ENCODE measurements at regions of chr15 and their contacts with region 1.

Region 1: DNA sequence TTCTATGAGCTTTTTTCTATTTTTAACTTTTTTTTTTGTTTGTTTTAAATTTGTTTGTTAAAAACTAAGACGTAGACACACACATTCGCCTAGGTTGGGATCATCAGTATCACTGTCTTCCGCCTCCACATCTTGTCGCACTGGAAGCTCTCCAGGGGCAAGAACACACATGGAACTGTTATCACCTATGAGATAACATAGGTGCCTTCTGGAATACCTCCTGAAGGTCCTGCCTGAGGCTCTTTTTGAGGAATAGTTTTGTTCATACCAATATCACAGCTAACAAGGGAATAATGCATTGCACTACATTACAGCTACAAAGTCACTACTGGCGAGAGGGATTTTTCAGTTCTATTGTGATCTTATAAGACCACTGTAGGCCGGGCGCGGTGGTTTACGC is 29.9 kb downstream of the ZWILCH start:
- DNase-seq: no peak
- ATAC-seq: no peak
- H3K4me3 ChIP-seq: no peak overlapping the region
- H3K4me3 Mint-ChIP-seq: no peak overlapping the region
- H3K27ac ChIP-seq: no peak overlapping the region
- H3K27ac Mint-ChIP-seq: no peak overlapping the region
- H3K4me1 ChIP-seq: no peaks in the 10 kb centered on the region
- H3K4me1 Mint-ChIP-seq: no peaks in the 10 kb centered on the region
- H3K27me3 ChIP-seq: no peaks in the 10 kb centered on the region
- H3K27me3 Mint-ChIP-seq: no peaks in the 10 kb centered on the region

Region 2: GRCh38 chr15:66515901-66516322 is 19.1 kb before region 1 on chr15:
- CTCF ChIA-PET with region 1: no interaction called
- POLR2A ChIA-PET with region 1: no interaction called
- DNase-seq: no peak
- ATAC-seq: no peak
- H3K4me3 ChIP-seq: no peak overlapping the region
- H3K4me3 Mint-ChIP-seq: no peak overlapping the region
- H3K27ac ChIP-seq: no peak overlapping the region
- H3K27ac Mint-ChIP-seq: no peak overlapping the region
- H3K4me1 ChIP-seq: no peaks in the 10 kb centered on the region
- H3K4me1 Mint-ChIP-seq: no peaks in the 10 kb centered on the region
- H3K27me3 ChIP-seq: no peaks in the 10 kb centered on the region
- H3K27me3 Mint-ChIP-seq: no peaks in the 10 kb centered on the region

Region 3: DNA sequence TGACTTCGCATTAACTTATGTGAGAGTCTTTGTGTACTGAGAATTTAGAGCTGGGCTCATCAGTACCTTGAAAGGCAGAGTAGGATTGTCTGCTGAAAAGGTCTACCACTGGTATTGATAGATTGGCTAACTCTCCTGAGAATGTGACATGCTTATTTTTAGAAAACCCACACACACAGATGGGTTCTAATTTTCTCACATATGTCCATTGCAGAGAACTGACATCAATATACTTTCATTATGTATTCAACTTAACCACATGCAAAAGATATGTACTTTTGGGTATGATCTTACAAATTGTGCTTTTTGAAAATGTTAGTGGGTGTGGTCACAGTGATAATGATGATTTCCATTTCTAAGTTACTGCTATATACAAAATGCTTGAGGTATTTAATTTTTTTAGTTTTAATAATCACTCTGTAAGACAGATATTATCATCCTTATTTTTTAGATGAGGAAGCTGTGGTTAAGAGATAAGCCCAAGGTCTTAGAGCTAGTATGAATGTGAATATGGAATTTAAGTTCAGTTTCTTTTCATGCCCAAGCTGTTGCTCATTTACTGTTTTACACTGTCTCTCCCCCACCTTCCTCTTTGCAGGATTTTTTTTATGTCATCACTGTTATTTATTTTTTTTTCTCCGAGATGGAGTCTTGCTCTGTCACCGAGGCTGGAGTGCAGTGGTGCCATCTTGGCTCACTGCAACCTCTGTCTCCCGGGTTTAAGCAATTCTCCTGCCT is 1029.8 kb after region 1 on chr15:
- CTCF ChIA-PET with region 1: no interaction called
- POLR2A ChIA-PET with region 1: interaction called in 1 of 2 experiments, 11 read pairs
- DNase-seq: no peak
- ATAC-seq: no peak
- H3K4me3 ChIP-seq: no peak overlapping the region
- H3K4me3 Mint-ChIP-seq: no peak overlapping the region
- H3K27ac ChIP-seq: no peak overlapping the region
- H3K27ac Mint-ChIP-seq: no peak overlapping the region
- H3K4me1 ChIP-seq: no peaks in the 10 kb centered on the region
- H3K4me1 Mint-ChIP-seq: peaks cover 22 to 29% (median 29%) of the 10 kb centered on the region in 3 donors
- H3K27me3 ChIP-seq: no peaks in the 10 kb centered on the region
- H3K27me3 Mint-ChIP-seq: no peaks in the 10 kb centered on the region

Measured in T-cell (primary cell).